Activated B cell treated with CpG ODN at 0.5 μM for 24 hours (primary cell): ENCODE measurements at regions of chr20 and their contacts with region 1.

Region 1: GRCh38 chr20:33554914-33555420 is 65.1 kb downstream of the CBFA2T2 start:
- DNase-seq: no peak
- ATAC-seq: peak; percentile 98
- H3K4me3 Mint-ChIP-seq: peak overlapping the region; percentile 57
- H3K27ac Mint-ChIP-seq: peak overlapping the region; percentile 91
- H3K4me1 Mint-ChIP-seq: peaks cover 38% of the 10 kb centered on the region
- H3K27me3 Mint-ChIP-seq: no peaks in the 10 kb centered on the region
- CTCF ChIP-seq: no peak

Region 2: GRCh38 chr20:33489495-33490022 is 65.4 kb before region 1 on chr20:
- CTCF ChIA-PET with region 1: interaction called, 5 read pairs
- POLR2A ChIA-PET with region 1: interaction called, 13 read pairs
- intact Hi-C with region 1: loop called (anchors 1 kb)
- DNase-seq: peak; percentile 99
- ATAC-seq: peak; percentile 96
- H3K4me3 Mint-ChIP-seq: peak overlapping the region; percentile 84
- H3K27ac Mint-ChIP-seq: peak overlapping the region; percentile 88
- H3K4me1 Mint-ChIP-seq: peaks cover 15% of the 10 kb centered on the region
- H3K27me3 Mint-ChIP-seq: no peaks in the 10 kb centered on the region
- CTCF ChIP-seq: no peak

Region 3: GRCh38 chr20:33568378-33568777 is 13.4 kb after region 1 on chr20:
- CTCF ChIA-PET with region 1: no interaction called
- POLR2A ChIA-PET with region 1: interaction called, 5 read pairs
- intact Hi-C with region 1: loop called (anchors 1 kb)
- DNase-seq: no peak
- ATAC-seq: peak; percentile 77
- H3K4me3 Mint-ChIP-seq: peak overlapping the region; percentile 45
- H3K27ac Mint-ChIP-seq: peak overlapping the region; percentile 20
- H3K4me1 Mint-ChIP-seq: peaks cover 40% of the 10 kb centered on the region
- H3K27me3 Mint-ChIP-seq: no peaks in the 10 kb centered on the region
- CTCF ChIP-seq: no peak

Region 4: GRCh38 chr20:33594743-33595142 is 39.8 kb after region 1 on chr20:
- CTCF ChIA-PET with region 1: no interaction called
- POLR2A ChIA-PET with region 1: interaction called, 3 read pairs
- intact Hi-C with region 1: loop called (anchors 5 kb)
- DNase-seq: no peak
- ATAC-seq: no peak
- H3K4me3 Mint-ChIP-seq: no peak overlapping the region
- H3K27ac Mint-ChIP-seq: no peak overlapping the region
- H3K4me1 Mint-ChIP-seq: peaks cover 10% of the 10 kb centered on the region
- H3K27me3 Mint-ChIP-seq: no peaks in the 10 kb centered on the region
- CTCF ChIP-seq: no peak

Region 5: DNA sequence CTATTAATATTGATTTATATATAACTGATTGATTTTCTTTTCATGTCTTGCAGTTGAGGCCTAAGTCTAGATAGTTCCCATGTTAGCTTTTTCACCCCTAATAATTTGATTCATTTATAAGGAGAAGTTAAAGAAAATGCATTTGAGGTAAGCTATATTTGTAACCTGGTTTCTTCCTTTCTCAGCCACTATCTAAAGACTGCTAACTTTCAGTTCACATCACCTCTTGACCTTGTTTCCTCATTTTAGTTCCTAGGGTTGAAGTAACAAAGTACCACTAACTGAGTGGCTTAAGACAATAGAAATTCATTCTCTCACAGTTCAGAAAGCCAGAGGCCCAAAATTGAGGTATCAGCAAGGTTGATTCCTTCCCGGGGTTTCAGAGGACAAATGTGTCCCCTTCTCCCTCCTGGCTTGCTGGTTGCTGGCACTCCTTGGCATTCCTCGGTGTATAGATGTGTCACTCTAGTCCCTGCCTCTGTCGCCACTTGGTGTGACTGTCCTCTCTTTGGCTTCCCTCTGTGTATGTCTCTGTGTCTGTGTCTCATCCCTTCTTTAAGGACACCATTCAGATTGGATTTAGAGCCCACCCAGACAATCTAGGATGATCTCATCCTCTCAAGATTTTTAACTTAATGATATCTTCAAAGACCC is 51.3 kb after region 1 on chr20:
- CTCF ChIA-PET with region 1: interaction called, 3 read pairs
- POLR2A ChIA-PET with region 1: interaction called, 6 read pairs
- intact Hi-C with region 1: loop called (anchors 5 kb)
- DNase-seq: peak; percentile 16
- ATAC-seq: peak; percentile 69
- H3K4me3 Mint-ChIP-seq: peak overlapping the region; percentile 52
- H3K27ac Mint-ChIP-seq: peak overlapping the region; percentile 87
- H3K4me1 Mint-ChIP-seq: peaks cover 86% of the 10 kb centered on the region
- H3K27me3 Mint-ChIP-seq: no peaks in the 10 kb centered on the region
- CTCF ChIP-seq: no peak

Region 6: GRCh38 chr20:33773412-33774089 is 218.6 kb after region 1 on chr20:
- CTCF ChIA-PET with region 1: no interaction called
- POLR2A ChIA-PET with region 1: no interaction called
- intact Hi-C with region 1: no loop called
- DNase-seq: no peak
- ATAC-seq: peak; percentile 65
- H3K4me3 Mint-ChIP-seq: peak overlapping the region; percentile 41
- H3K27ac Mint-ChIP-seq: peak overlapping the region; percentile 93
- H3K4me1 Mint-ChIP-seq: peaks cover 64% of the 10 kb centered on the region
- H3K27me3 Mint-ChIP-seq: no peaks in the 10 kb centered on the region
- CTCF ChIP-seq: no peak